ENCODE measurements at regions of chr9 and their contacts with region 1.

Region 1: DNA sequence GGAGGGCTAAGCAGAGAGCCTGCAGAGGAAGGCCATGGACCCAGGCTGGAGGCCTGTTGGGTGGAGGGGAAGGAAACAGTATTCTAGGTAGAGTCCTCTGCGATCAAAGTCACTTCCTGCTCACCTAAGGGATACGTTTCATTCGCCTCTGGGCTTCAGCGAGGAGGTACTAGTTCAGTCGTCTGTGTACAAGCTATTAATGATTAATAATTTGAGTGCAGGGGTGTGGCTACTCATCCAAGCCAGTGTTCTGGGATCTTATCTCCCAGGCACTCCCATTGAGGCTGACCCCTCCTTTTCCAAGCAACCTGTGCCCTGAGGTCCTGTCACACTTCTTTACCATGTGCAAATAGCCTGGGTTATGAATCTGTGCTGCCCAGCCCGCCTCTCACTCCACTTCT is 25.2 kb downstream of the RALGPS1 start:
- DNase-seq: no peak
- ATAC-seq: no peak
- H3K4me3 ChIP-seq: no peak overlapping the region
- H3K4me3 Mint-ChIP-seq: no peak overlapping the region
- H3K27ac ChIP-seq: no peak overlapping the region
- H3K27ac Mint-ChIP-seq: no peak overlapping the region
- H3K4me1 ChIP-seq: no peaks in the 10 kb centered on the region
- H3K4me1 Mint-ChIP-seq: peaks cover 6% of the 10 kb centered on the region
- H3K27me3 ChIP-seq: no peaks in the 10 kb centered on the region
- H3K27me3 Mint-ChIP-seq: peaks cover 8% of the 10 kb centered on the region
- CTCF ChIP-seq: no peak

Region 2: GRCh38 chr9:125706661-125707471 is 1233.0 kb before region 1 on chr9 and contains the start of gene MAPKAP1:
- CTCF ChIA-PET with region 1: no interaction called
- POLR2A ChIA-PET with region 1: no interaction called
- intact Hi-C with region 1: no loop called
- DNase-seq: peak; percentile 76 to 96 (median 94)
- ATAC-seq: peak; percentile 98
- H3K4me3 ChIP-seq: peak within 1 kb of the TSS; percentile 54 to 71
- H3K4me3 Mint-ChIP-seq: peak within 1 kb of the TSS; percentile 87
- H3K27ac ChIP-seq: peak within 1 kb of the TSS; percentile 41 to 68
- H3K27ac Mint-ChIP-seq: peak within 1 kb of the TSS; percentile 88
- H3K4me1 ChIP-seq: peaks cover 17% of the 10 kb centered on the region
- H3K4me1 Mint-ChIP-seq: peaks cover 39% of the 10 kb centered on the region
- H3K27me3 ChIP-seq: peaks cover 0 to 3% of the 10 kb centered on the region in 2 experiments
- H3K27me3 Mint-ChIP-seq: peaks cover 8% of the 10 kb centered on the region
- CTCF ChIP-seq: no peak
- total RNA-seq, gene MAPKAP1: 38.2 to 42.7 TPM

Region 3: GRCh38 chr9:126927419-126927818 is 12.4 kb before region 1 on chr9:
- CTCF ChIA-PET with region 1: interaction called, 12 read pairs
- POLR2A ChIA-PET with region 1: no interaction called
- intact Hi-C with region 1: no loop called
- DNase-seq: no peak
- ATAC-seq: no peak
- H3K4me3 ChIP-seq: no peak overlapping the region
- H3K4me3 Mint-ChIP-seq: no peak overlapping the region
- H3K27ac ChIP-seq: no peak overlapping the region
- H3K27ac Mint-ChIP-seq: no peak overlapping the region
- H3K4me1 ChIP-seq: no peaks in the 10 kb centered on the region
- H3K4me1 Mint-ChIP-seq: no peaks in the 10 kb centered on the region
- H3K27me3 ChIP-seq: no peaks in the 10 kb centered on the region
- H3K27me3 Mint-ChIP-seq: peaks cover 9% of the 10 kb centered on the region
- CTCF ChIP-seq: no peak

Region 4: GRCh38 chr9:126965541-126966428 is 26.0 kb after region 1 on chr9:
- CTCF ChIA-PET with region 1: interaction called, 20 read pairs
- POLR2A ChIA-PET with region 1: no interaction called
- intact Hi-C with region 1: no loop called
- DNase-seq: peak in 8 of 9 experiments; percentile 17 to 73 (median 56)
- ATAC-seq: peak; percentile 82
- H3K4me3 ChIP-seq: no peak overlapping the region
- H3K4me3 Mint-ChIP-seq: no peak overlapping the region
- H3K27ac ChIP-seq: no peak overlapping the region
- H3K27ac Mint-ChIP-seq: no peak overlapping the region
- H3K4me1 ChIP-seq: no peaks in the 10 kb centered on the region
- H3K4me1 Mint-ChIP-seq: peaks cover 5% of the 10 kb centered on the region
- H3K27me3 ChIP-seq: no peaks in the 10 kb centered on the region
- H3K27me3 Mint-ChIP-seq: peaks cover 10% of the 10 kb centered on the region
- CTCF ChIP-seq: peak; percentile 75

Region 5: GRCh38 chr9:127199001-127199791 is 259.4 kb after region 1 on chr9:
- CTCF ChIA-PET with region 1: interaction called, 216 read pairs
- POLR2A ChIA-PET with region 1: interaction called, 7 read pairs
- intact Hi-C with region 1: loop called in 1 of 2 experiments (anchors 1 kb)
- DNase-seq: peak; percentile 59 to 87 (median 79)
- ATAC-seq: peak; percentile 85
- H3K4me3 ChIP-seq: no peak overlapping the region
- H3K4me3 Mint-ChIP-seq: no peak overlapping the region
- H3K27ac ChIP-seq: no peak overlapping the region
- H3K27ac Mint-ChIP-seq: no peak overlapping the region
- H3K4me1 ChIP-seq: peaks cover 12% of the 10 kb centered on the region
- H3K4me1 Mint-ChIP-seq: peaks cover 11% of the 10 kb centered on the region
- H3K27me3 ChIP-seq: peaks cover 0 to 4% of the 10 kb centered on the region in 2 experiments
- H3K27me3 Mint-ChIP-seq: no peaks in the 10 kb centered on the region
- CTCF ChIP-seq: peak; percentile 87

Region 6: GRCh38 chr9:127205183-127205470 is 265.3 kb after region 1 on chr9:
- CTCF ChIA-PET with region 1: interaction called, 216 read pairs
- POLR2A ChIA-PET with region 1: no interaction called
- intact Hi-C with region 1: no loop called
- DNase-seq: no peak
- ATAC-seq: no peak
- H3K4me3 ChIP-seq: no peak overlapping the region
- H3K4me3 Mint-ChIP-seq: no peak overlapping the region
- H3K27ac ChIP-seq: no peak overlapping the region
- H3K27ac Mint-ChIP-seq: no peak overlapping the region
- H3K4me1 ChIP-seq: peaks cover 8% of the 10 kb centered on the region
- H3K4me1 Mint-ChIP-seq: peaks cover 6% of the 10 kb centered on the region
- H3K27me3 ChIP-seq: no peaks in the 10 kb centered on the region
- H3K27me3 Mint-ChIP-seq: peaks cover 6% of the 10 kb centered on the region
- CTCF ChIP-seq: no peak

Region 7: DNA sequence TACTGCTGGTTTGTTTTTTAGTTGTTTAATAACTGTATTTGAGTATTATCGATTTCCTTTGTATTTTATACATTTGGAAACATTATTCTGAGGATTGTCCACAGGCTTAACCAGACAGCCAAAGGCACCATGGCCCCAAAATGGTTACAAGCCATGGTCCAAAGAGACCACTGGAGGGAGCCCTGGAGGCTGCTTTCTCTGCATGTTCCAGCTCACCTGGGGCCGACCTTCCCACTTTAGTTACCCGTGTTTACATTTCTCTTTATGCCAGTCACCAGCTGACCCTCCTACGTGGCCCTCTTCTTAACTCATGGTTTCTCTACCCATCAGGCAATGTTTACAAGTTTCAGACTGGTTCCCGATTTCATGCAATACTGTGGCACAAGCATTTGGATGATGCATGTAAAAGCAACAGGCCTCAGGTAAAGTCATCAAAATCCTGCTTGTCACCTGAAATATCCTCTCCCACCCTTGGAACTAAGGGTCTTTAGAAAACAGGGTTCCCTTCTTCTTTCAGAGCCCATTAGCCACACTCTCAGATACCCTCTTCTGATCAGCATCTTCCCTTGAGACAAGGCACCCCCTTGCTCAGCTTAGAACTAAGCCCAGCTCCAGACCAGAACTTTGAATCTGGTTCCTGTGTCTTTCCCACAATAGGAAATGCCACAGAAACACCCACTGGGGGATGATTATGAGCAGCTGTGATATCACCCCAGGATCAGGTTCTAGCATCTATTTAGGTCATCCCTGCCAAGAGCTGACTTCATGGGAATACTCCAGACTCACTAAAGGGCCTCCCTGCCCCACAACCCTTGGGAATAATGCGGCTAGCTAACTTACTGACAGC is 274.8 kb after region 1 on chr9:
- CTCF ChIA-PET with region 1: interaction called, 10 read pairs
- POLR2A ChIA-PET with region 1: interaction called, 3 read pairs
- intact Hi-C with region 1: no loop called
- DNase-seq: peak; percentile 36 to 73 (median 64)
- ATAC-seq: peak; percentile 93
- H3K4me3 ChIP-seq: no peak overlapping the region
- H3K4me3 Mint-ChIP-seq: no peak overlapping the region
- H3K27ac ChIP-seq: no peak overlapping the region
- H3K27ac Mint-ChIP-seq: no peak overlapping the region
- H3K4me1 ChIP-seq: no peaks in the 10 kb centered on the region
- H3K4me1 Mint-ChIP-seq: peaks cover 3% of the 10 kb centered on the region
- H3K27me3 ChIP-seq: no peaks in the 10 kb centered on the region
- H3K27me3 Mint-ChIP-seq: peaks cover 8% of the 10 kb centered on the region
- CTCF ChIP-seq: peak; percentile 69

Region 8: DNA sequence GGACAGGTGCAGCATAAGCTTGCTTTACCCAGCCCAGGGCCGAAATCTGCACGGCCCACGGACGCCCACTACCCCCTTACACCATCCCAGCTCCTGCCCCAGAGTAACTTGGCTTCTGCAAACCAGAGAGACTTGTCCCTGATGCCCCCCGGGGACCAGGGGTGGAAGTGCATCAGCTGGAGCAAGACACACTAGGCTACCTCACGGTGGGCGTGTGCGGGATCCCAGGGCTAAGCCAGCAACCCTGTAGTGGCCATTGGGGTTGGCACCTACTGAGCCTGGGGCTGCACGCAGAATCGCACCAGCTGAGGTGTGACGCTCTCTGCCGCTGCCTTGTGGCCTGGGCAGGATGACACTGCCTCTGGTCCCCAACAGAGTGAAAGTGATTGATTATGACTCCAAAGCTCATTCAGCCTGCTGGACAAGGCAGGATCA is 478.2 kb after region 1 on chr9:
- CTCF ChIA-PET with region 1: no interaction called
- POLR2A ChIA-PET with region 1: no interaction called
- intact Hi-C with region 1: loop called in 1 of 2 experiments (anchors 5 kb)
- DNase-seq: peak in 8 of 9 experiments; percentile 19 to 71 (median 51)
- ATAC-seq: peak; percentile 87
- H3K4me3 ChIP-seq: no peak overlapping the region
- H3K4me3 Mint-ChIP-seq: no peak overlapping the region
- H3K27ac ChIP-seq: no peak overlapping the region
- H3K27ac Mint-ChIP-seq: no peak overlapping the region
- H3K4me1 ChIP-seq: peaks cover 6% of the 10 kb centered on the region
- H3K4me1 Mint-ChIP-seq: peaks cover 4% of the 10 kb centered on the region
- H3K27me3 ChIP-seq: peaks cover 2% of the 10 kb centered on the region in 2 experiments
- H3K27me3 Mint-ChIP-seq: peaks cover 26% of the 10 kb centered on the region
- CTCF ChIP-seq: peak; percentile 24